Spleen (tissue), 13 donors: ENCODE measurements at regions of chr19 and their contacts with region 1.

Region 1: DNA sequence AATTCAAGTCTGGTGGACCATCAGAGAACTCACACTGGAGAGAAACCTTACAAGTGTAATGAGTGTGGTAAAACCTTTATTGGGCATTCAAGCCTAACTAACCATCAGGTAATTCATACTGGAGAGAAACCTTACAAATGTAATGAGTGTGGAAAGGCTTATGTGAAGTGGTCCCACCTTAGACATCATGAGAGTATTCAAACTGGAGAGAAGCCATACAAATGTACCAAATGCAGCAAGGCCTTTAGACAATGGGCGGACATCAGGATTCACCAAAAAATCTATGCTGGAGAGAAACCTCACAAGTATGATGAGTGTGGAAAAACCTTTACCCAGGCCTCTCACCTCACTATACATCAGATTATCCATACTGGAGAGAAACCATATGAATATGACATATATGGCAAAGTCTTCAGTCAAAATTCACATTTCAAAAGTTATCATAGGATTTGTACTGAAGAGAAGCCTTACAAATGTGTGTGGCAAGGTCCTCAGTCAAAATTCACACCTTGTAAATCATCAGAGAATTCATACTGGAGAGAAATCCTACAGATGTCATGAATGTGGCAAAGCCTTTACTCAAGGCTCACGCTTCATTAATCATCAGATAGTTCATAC is 19.7 kb upstream of the ZNF665 start:
- DNase-seq: no peak
- H3K4me3 ChIP-seq: peak overlapping the region in 1 of 8 donors; percentile 14
- H3K27ac ChIP-seq: no peak overlapping the region
- H3K4me1 ChIP-seq: no peaks in the 10 kb centered on the region
- H3K27me3 ChIP-seq: no peaks in the 10 kb centered on the region
- CTCF ChIP-seq: no peak
- POLR2A ChIP-seq: no peak

Region 2: GRCh38 chr19:53076977-53077376 is 135.8 kb before region 1 on chr19:
- intact Hi-C with region 1: no loop called
- DNase-seq: no peak
- H3K4me3 ChIP-seq: no peak overlapping the region
- H3K27ac ChIP-seq: peak overlapping the region in 4 of 8 donors; percentile 2 to 42 (median 21)
- H3K4me1 ChIP-seq: peaks cover 0 to 27% (median 6%) of the 10 kb centered on the region in 6 donors
- H3K27me3 ChIP-seq: no peaks in the 10 kb centered on the region
- CTCF ChIP-seq: peak in 10 of 11 experiments; percentile 19 to 66 (median 56)
- POLR2A ChIP-seq: no peak

Region 3: GRCh38 chr19:53246498-53246897 is 33.7 kb after region 1 on chr19:
- intact Hi-C with region 1: loop called (anchors 5 kb)
- DNase-seq: no peak
- H3K4me3 ChIP-seq: no peak overlapping the region
- H3K27ac ChIP-seq: no peak overlapping the region
- H3K4me1 ChIP-seq: no peaks in the 10 kb centered on the region
- H3K27me3 ChIP-seq: no peaks in the 10 kb centered on the region
- CTCF ChIP-seq: no peak
- POLR2A ChIP-seq: no peak